Caco-2 (cell line): ENCODE measurements at regions of chr11 and their contacts with region 1.

Region 1: DNA sequence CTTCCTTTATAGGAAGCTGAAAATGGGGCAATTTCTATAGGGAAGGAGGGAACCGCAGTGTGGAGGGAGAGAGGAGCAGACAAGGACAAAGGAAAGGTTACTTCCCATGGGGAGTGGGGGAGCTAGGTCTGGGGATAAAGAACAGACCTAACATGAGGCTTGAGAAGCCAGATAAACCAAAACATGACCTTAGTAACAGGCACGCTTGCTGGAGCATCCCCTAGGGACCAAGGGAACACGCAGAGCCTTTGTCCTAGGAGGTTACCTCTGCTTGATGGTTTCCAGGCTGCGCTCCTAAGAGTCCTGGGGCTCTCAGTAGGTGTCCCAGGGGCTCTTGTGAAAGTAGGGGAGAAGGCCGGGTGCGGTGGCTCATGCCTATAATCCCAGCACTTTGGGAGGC is 271.4 kb upstream of the NCAM1 start:
- DNase-seq: no peak
- H3K4me3 ChIP-seq: no peak overlapping the region
- H3K4me3 Mint-ChIP-seq: no peak overlapping the region
- H3K27ac Mint-ChIP-seq: no peak overlapping the region
- H3K4me1 ChIP-seq: no peaks in the 10 kb centered on the region
- H3K4me1 Mint-ChIP-seq: no peaks in the 10 kb centered on the region
- H3K27me3 ChIP-seq: peaks cover 4% of the 10 kb centered on the region; the same call in 1 of the 2 replicates
- H3K27me3 Mint-ChIP-seq: peaks cover 27% of the 10 kb centered on the region
- CTCF ChIP-seq: no peak

Region 2: DNA sequence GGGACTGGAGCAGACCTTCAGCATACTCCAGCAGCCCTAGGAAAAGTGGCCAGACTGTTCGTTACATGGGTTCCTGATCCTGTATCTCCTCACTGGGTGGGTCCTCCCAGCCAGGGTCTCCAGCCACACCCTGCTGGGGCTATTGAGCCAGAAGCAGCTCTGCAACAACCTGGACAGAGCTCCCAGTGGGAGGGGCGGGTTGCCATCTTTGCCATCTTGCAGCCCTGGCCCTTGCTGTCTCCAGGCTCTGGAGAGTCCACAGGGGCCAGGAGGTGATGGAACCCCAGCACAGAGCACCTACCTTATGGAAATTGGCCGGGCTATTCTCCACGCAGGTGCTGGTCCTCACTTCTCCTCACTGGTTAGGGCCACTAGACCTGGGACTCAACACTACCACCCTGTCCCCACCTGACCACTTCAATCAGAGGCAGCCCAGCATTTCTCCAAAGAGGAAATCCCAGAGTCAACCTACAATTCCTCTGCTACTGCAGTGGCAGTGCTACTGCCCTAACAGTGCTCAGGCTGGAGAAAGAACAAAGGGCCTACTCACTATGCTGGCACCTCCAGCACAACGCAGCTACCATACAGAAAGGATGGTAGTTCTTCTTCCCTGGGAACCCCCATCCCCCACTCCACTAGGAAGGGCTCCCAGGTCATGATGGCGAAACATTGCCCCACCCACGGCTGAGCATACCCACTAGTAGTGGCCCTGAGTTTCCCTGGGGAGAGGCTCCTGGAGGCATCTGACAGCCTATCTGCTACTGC is 18.9 kb before region 1 on chr11:
- CTCF ChIA-PET with region 1: interaction called, 3 read pairs
- POLR2A ChIA-PET with region 1: no interaction called
- intact Hi-C with region 1: loop called (anchors 1 kb)
- DNase-seq: no peak
- H3K4me3 ChIP-seq: no peak overlapping the region
- H3K4me3 Mint-ChIP-seq: no peak overlapping the region
- H3K27ac Mint-ChIP-seq: no peak overlapping the region
- H3K4me1 ChIP-seq: no peaks in the 10 kb centered on the region
- H3K4me1 Mint-ChIP-seq: no peaks in the 10 kb centered on the region
- H3K27me3 ChIP-seq: no peaks in the 10 kb centered on the region
- H3K27me3 Mint-ChIP-seq: peaks cover 12% of the 10 kb centered on the region
- CTCF ChIP-seq: no peak